PC-9 (cell line): ENCODE measurements at regions of chr12 and their contacts with region 1.

Region 1: GRCh38 chr12:42893802-42894201 is 304.3 kb upstream of the PRICKLE1 start:
- DNase-seq: no peak
- H3K4me3 ChIP-seq: no peak overlapping the region
- H3K27ac ChIP-seq: no peak overlapping the region
- H3K4me1 ChIP-seq: no peaks in the 10 kb centered on the region
- H3K27me3 ChIP-seq: no peaks in the 10 kb centered on the region
- CTCF ChIP-seq: no peak

Region 2: GRCh38 chr12:42854208-42854607 is 39.6 kb before region 1 on chr12:
- CTCF ChIA-PET with region 1: no interaction called
- POLR2A ChIA-PET with region 1: interaction called, 17 read pairs
- intact Hi-C with region 1: no loop called
- DNase-seq: no peak
- H3K4me3 ChIP-seq: no peak overlapping the region
- H3K27ac ChIP-seq: no peak overlapping the region
- H3K4me1 ChIP-seq: no peaks in the 10 kb centered on the region
- H3K27me3 ChIP-seq: no peaks in the 10 kb centered on the region
- CTCF ChIP-seq: no peak

Region 3: DNA sequence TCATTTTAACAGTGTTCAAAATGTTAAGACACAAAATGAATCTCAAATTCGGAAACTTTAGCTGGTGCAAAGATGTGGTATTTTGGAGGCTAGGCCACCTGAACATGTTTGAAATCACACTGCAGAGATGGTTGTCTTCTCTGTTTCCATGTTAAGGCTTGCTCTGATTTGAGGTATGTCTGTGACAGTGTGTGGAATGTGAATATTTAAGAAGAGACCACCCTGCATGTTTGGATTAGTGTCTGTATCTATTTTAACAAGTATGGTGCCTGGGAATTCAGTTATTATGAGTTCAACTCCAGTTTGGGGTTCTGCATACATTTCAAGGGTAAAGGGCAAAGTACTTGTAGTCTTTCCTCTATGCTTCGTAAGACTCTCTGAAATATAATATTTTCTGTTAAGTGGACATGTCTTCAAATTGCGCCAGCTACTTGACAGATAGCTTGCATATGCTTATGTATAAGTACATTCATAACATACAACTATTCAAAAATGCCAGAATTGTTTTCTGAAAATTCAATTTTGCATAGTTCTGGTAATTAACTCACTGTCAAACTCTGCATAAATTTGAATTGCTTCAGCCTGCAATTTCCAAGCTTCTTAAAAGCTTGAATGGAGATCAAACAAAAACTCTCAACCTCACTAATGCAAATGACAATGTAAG is 234.2 kb after region 1 on chr12:
- CTCF ChIA-PET with region 1: no interaction called
- POLR2A ChIA-PET with region 1: no interaction called
- intact Hi-C with region 1: no loop called
- DNase-seq: no peak
- H3K4me3 ChIP-seq: no peak overlapping the region
- H3K27ac ChIP-seq: no peak overlapping the region
- H3K4me1 ChIP-seq: no peaks in the 10 kb centered on the region
- H3K27me3 ChIP-seq: no peaks in the 10 kb centered on the region
- CTCF ChIP-seq: no peak